ENCODE measurements at regions of chr6 and their contacts with region 1.

Region 1: GRCh38 chr6:88179692-88180091 is 13.5 kb upstream of the CNR1 start:
- DNase-seq: no peak
- H3K4me3 Mint-ChIP-seq: no peak overlapping the region
- H3K27ac Mint-ChIP-seq: no peak overlapping the region
- H3K4me1 Mint-ChIP-seq: no peaks in the 10 kb centered on the region
- H3K27me3 Mint-ChIP-seq: peaks cover 19% of the 10 kb centered on the region

Region 2: GRCh38 chr6:88072462-88072861 is 107.2 kb before region 1 on chr6:
- CTCF ChIA-PET with region 1: no interaction called
- POLR2A ChIA-PET with region 1: no interaction called
- DNase-seq: no peak
- H3K4me3 Mint-ChIP-seq: no peak overlapping the region
- H3K27ac Mint-ChIP-seq: no peak overlapping the region
- H3K4me1 Mint-ChIP-seq: no peaks in the 10 kb centered on the region
- H3K27me3 Mint-ChIP-seq: no peaks in the 10 kb centered on the region

Region 3: GRCh38 chr6:88157106-88157505 is 22.6 kb before region 1 on chr6:
- CTCF ChIA-PET with region 1: no interaction called
- POLR2A ChIA-PET with region 1: interaction called, 11 read pairs
- DNase-seq: no peak
- H3K4me3 Mint-ChIP-seq: no peak overlapping the region
- H3K27ac Mint-ChIP-seq: no peak overlapping the region
- H3K4me1 Mint-ChIP-seq: no peaks in the 10 kb centered on the region
- H3K27me3 Mint-ChIP-seq: peaks cover 9% of the 10 kb centered on the region